PC-3 (cell line): ENCODE measurements at regions of chr2 and their contacts with region 1.

Region 1: GRCh38 chr2:175167792-175168563 is at the start of gene ATF2:
- DNase-seq: peak; percentile 99
- ATAC-seq: peak; percentile 91
- H3K4me3 ChIP-seq: peak within 1 kb of the TSS; percentile 81
- H3K27ac ChIP-seq: peak within 1 kb of the TSS; percentile 58
- H3K4me1 ChIP-seq: peaks cover 14% of the 10 kb centered on the region
- H3K27me3 ChIP-seq: no peaks in the 10 kb centered on the region
- CTCF ChIP-seq: no peak
- total RNA-seq, gene ATF2: 12.6 and 15.0 TPM in 2 replicates

Region 2: DNA sequence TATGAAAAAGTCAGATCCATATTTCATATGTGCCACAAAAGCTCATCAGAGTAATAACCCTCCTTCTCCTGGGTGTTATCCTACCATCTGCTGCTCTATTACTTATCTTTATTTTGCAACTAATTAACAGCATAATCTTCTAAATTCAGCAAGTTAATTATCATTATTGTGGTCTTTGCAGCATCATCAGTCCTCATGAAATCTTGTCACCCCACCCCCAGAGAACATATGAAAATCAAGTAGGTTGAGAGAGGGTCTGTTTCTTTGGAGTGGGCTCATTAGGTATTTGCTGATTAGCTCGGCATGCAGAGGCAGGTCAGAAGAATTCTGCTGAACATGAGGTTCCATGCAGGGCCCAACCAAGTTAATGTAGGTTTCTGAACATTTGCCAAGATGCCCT is 64.8 kb before region 1 on chr2:
- CTCF ChIA-PET with region 1: no interaction called
- POLR2A ChIA-PET with region 1: interaction called, 19 read pairs
- intact Hi-C with region 1: no loop called
- DNase-seq: no peak
- ATAC-seq: no peak
- H3K4me3 ChIP-seq: no peak overlapping the region
- H3K27ac ChIP-seq: no peak overlapping the region
- H3K4me1 ChIP-seq: no peaks in the 10 kb centered on the region
- H3K27me3 ChIP-seq: no peaks in the 10 kb centered on the region
- CTCF ChIP-seq: no peak

Region 3: GRCh38 chr2:175140332-175140731 is 27.6 kb before region 1 on chr2:
- CTCF ChIA-PET with region 1: no interaction called
- POLR2A ChIA-PET with region 1: no interaction called
- intact Hi-C with region 1: no loop called
- DNase-seq: no peak
- ATAC-seq: no peak
- H3K4me3 ChIP-seq: no peak overlapping the region
- H3K27ac ChIP-seq: no peak overlapping the region
- H3K4me1 ChIP-seq: no peaks in the 10 kb centered on the region
- H3K27me3 ChIP-seq: no peaks in the 10 kb centered on the region
- CTCF ChIP-seq: no peak